Activated CD4-positive, alpha-beta T cell treated with anti-CD3 and anti-CD28 coated beads, Interleukin-2, amount 10 ng/mL, durations not matched to agents 7 days and 5 days (primary cell): ENCODE measurements at regions of chr3 and their contacts with region 1.

Region 1: DNA sequence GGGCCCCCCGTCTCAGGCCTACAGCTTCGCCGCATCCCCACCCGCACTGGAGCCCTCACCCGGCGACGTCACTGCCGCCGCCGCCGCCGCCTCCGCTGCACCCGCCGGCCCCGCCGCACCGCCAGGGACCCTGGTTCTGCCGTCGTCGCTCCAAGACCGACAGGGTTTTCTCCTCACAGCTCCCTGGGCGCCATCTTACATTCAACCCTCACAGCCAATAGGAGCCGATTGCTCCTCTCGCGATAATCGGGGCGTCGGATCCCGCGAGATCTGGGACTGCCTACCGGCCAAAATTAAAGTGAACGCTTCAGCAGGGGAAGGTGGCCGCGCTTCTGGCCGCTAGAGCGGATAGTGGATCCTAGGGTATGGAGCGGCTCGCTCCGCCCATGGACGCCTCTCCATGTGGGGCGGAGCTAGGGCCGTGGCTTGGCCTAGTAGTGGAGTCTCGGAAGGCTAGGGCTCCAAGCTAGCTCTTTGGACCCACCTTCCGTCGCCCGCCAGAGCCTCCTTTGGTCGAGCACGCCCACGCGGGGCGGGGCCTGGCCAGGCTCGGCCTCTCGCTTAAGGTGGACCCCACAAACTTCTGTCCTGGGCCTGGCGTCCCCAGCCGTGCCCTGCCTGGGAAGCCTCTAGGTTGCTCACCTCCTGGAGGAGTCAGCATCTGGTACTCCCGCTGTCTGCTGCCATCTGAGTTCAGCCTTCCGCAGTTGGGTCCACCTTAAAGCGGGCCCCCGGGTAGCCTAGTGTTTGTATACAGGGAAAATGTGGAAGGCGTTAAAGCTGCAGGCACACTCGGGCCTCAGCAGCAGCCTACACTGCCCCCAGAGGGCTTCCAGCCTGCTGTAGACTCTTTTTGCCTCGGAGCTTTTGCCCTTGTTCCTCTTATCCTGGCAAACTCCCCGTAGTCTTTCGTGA is at the start of gene QRICH1:
- DNase-seq: peak; percentile 99
- H3K4me3 Mint-ChIP-seq: peak within 1 kb of the TSS; percentile 93
- H3K27ac Mint-ChIP-seq: peak within 1 kb of the TSS; percentile 96
- H3K4me1 Mint-ChIP-seq: peaks cover 33% of the 10 kb centered on the region
- H3K27me3 Mint-ChIP-seq: no peaks in the 10 kb centered on the region
- total RNA-seq, gene QRICH1: 140 to 164 TPM

Region 2: GRCh38 chr3:48952510-48953118 is 141.5 kb before region 1 on chr3:
- CTCF ChIA-PET with region 1: no interaction called
- POLR2A ChIA-PET with region 1: no interaction called
- DNase-seq: peak; percentile 54
- H3K4me3 Mint-ChIP-seq: no peak overlapping the region
- H3K27ac Mint-ChIP-seq: peak overlapping the region; percentile 0
- H3K4me1 Mint-ChIP-seq: peaks cover 13% of the 10 kb centered on the region
- H3K27me3 Mint-ChIP-seq: no peaks in the 10 kb centered on the region

Region 3: GRCh38 chr3:48989796-48990635 is 104.1 kb before region 1 on chr3 and contains the start of gene P4HTM:
- CTCF ChIA-PET with region 1: interaction called, 10 read pairs
- POLR2A ChIA-PET with region 1: interaction called, 5 read pairs
- DNase-seq: peak; percentile 65
- H3K4me3 Mint-ChIP-seq: peak within 1 kb of the TSS; percentile 91
- H3K27ac Mint-ChIP-seq: peak within 1 kb of the TSS; percentile 95
- H3K4me1 Mint-ChIP-seq: peaks cover 56% of the 10 kb centered on the region
- H3K27me3 Mint-ChIP-seq: no peaks in the 10 kb centered on the region
- total RNA-seq, gene P4HTM: 45.3 to 47.6 TPM

Region 4: DNA sequence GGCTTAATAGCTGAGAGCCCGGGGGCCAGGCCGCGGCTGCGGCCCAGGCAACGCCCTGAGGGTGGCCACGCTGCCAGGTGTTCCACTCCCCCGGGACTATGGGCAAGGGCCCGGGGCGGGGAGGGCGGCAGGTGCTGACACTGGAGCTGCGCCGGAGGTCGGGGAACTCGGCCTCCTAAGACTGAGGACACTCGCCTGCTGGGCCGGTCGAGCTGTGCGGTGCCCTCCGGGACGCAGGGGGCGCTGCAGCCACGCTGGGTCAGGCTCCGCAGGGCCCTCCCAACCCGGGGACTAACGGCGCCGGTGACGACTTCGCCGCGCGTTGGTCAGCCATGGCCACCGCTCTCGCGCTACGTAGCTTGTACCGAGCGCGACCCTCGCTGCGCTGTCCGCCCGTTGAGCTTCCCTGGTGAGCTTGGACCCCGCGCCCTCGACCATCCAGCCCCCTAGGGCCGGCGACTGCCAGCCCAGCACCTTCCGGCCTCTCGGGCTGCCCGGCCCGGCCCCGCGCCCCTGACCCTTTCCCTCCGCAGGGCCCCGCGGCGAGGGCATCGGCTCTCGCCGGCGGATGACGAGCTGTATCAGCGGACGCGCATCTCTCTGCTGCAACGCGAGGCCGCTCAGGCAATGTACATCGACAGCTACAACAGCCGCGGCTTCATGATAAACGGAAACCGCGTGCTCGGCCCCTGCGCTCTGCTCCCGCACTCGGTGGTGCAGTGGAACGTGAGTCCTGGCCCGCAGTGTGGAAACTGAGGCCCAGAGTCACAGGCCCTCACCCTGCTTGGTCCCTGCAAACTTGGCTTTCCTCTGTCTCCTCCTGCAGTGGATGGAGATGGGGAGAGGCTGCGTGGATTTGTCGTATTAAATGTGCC is 72.1 kb before region 1 on chr3 and contains the start of gene NDUFAF3:
- CTCF ChIA-PET with region 1: interaction called, 27 read pairs
- POLR2A ChIA-PET with region 1: no interaction called
- DNase-seq: peak; percentile 91
- H3K4me3 Mint-ChIP-seq: peak within 1 kb of the TSS; percentile 87
- H3K27ac Mint-ChIP-seq: peak within 1 kb of the TSS; percentile 99
- H3K4me1 Mint-ChIP-seq: peaks cover 56% of the 10 kb centered on the region
- H3K27me3 Mint-ChIP-seq: no peaks in the 10 kb centered on the region
- total RNA-seq, gene NDUFAF3: 84.5 to 93.2 TPM

Region 5: DNA sequence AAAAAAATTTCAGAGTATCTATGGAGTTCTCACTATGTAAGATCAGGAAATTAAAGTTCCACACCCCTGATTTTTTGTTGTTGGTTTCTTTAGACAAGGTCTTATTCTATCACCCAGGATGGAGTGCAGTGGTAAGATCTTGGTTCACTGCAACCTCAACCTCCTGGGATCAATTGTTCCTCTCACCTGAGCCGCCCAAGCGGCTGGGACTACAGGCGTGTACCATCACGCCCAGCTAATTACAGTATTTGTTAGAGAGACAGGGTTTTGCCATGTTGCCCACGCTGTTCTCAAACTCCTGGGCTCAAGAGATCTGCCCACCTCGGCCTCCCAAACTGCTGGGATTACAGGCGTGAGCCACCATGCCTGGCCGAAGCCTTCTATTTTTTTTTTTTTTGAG is 12.7 kb before region 1 on chr3:
- CTCF ChIA-PET with region 1: interaction called, 12 read pairs
- POLR2A ChIA-PET with region 1: interaction called, 4 read pairs
- DNase-seq: no peak
- H3K4me3 Mint-ChIP-seq: no peak overlapping the region
- H3K27ac Mint-ChIP-seq: no peak overlapping the region
- H3K4me1 Mint-ChIP-seq: peaks cover 2% of the 10 kb centered on the region
- H3K27me3 Mint-ChIP-seq: no peaks in the 10 kb centered on the region

Region 6: GRCh38 chr3:49104483-49105291 is 10.6 kb after region 1 on chr3 and contains the start of gene QARS1:
- CTCF ChIA-PET with region 1: interaction called, 24 read pairs
- POLR2A ChIA-PET with region 1: interaction called, 4 read pairs
- DNase-seq: peak; percentile 94
- H3K4me3 Mint-ChIP-seq: peak within 1 kb of the TSS; percentile 99
- H3K27ac Mint-ChIP-seq: peak within 1 kb of the TSS; percentile 99
- H3K4me1 Mint-ChIP-seq: peaks cover 30% of the 10 kb centered on the region
- H3K27me3 Mint-ChIP-seq: no peaks in the 10 kb centered on the region
- total RNA-seq, gene QARS1: 246 to 326 TPM

Region 7: GRCh38 chr3:49112262-49112661 is 18.2 kb after region 1 on chr3:
- CTCF ChIA-PET with region 1: interaction called, 24 read pairs
- POLR2A ChIA-PET with region 1: no interaction called
- DNase-seq: no peak
- H3K4me3 Mint-ChIP-seq: no peak overlapping the region
- H3K27ac Mint-ChIP-seq: no peak overlapping the region
- H3K4me1 Mint-ChIP-seq: no peaks in the 10 kb centered on the region
- H3K27me3 Mint-ChIP-seq: no peaks in the 10 kb centered on the region

Region 8: GRCh38 chr3:49120438-49121131 is 26.5 kb after region 1 on chr3 and contains the start of gene USP19:
- CTCF ChIA-PET with region 1: interaction called, 12 read pairs
- POLR2A ChIA-PET with region 1: no interaction called
- DNase-seq: peak; percentile 94
- H3K4me3 Mint-ChIP-seq: peak within 1 kb of the TSS; percentile 91
- H3K27ac Mint-ChIP-seq: peak within 1 kb of the TSS; percentile 94
- H3K4me1 Mint-ChIP-seq: peaks cover 23% of the 10 kb centered on the region
- H3K27me3 Mint-ChIP-seq: no peaks in the 10 kb centered on the region
- total RNA-seq, gene USP19: 63.5 to 72.6 TPM